Gastrocnemius medialis (tissue), 4 donors: ENCODE measurements at regions of chr6 and their contacts with region 1.

Region 1: DNA sequence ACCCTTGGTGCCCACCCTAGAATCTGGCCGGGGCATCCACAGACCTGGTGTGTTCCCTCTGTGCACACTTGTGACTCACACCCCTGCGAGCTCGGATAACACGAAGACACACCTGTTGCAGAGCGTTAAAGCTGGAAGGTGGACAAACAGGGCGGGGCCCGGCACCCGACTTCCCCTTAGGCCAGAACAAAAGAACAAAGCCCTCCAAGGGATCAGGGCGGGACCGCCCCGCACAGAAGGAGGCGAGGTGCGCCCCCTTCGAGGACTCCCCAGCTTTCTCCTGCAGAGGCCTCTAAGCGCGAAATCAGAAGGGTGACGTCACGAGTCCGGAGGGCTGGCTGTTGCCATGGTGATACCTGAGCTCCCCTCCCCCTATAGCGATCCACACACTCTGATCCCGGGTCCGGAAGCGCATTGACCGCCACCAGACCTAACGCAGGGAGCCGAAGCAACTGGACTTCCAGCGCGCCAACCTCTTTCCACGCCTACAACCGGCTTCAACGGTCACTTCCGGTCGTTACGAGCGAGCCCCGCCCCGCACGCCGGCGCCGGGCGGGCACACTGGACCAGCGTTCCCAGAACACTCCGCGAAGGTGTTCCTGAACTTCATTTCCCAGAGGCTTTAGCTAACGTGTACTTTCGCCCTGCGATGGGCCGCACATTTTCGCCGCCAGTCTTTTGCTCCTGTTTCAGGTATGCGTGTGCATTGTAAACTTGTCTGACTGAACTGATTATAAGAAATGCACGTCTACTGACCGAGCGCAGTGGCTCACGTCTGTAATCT is at the start of gene ZNF184:
- DNase-seq: peak; percentile 88 to 93
- ATAC-seq: peak; percentile 97 to 99
- H3K4me3 ChIP-seq: peak within 1 kb of the TSS; percentile 62 to 98 (median 85)
- H3K27ac ChIP-seq: peak within 1 kb of the TSS; percentile 87 to 97 (median 95)
- H3K4me1 ChIP-seq: peaks cover 13 to 20% of the 10 kb centered on the region in 2 donors
- H3K27me3 ChIP-seq: no peaks in the 10 kb centered on the region
- CTCF ChIP-seq: peak in 1 of 5 experiments; percentile 4
- POLR2A ChIP-seq: peak; percentile 77
- total RNA-seq, gene ZNF184: 3.9 to 6.0 (median 4.4) TPM

Region 2: GRCh38 chr6:26156076-26156849 is 1316.5 kb before region 1 on chr6:
- in situ Hi-C with region 1: no loop called
- intact Hi-C with region 1: loop called (anchors 10 kb)
- DNase-seq: peak; percentile 81 to 89
- ATAC-seq: peak; percentile 70 to 76
- H3K4me3 ChIP-seq: peak overlapping the region; percentile 71 to 95 (median 77)
- H3K27ac ChIP-seq: peak overlapping the region; percentile 88 to 97 (median 93)
- H3K4me1 ChIP-seq: peaks cover 11 to 23% of the 10 kb centered on the region in 2 donors
- H3K27me3 ChIP-seq: no peaks in the 10 kb centered on the region
- CTCF ChIP-seq: no peak
- POLR2A ChIP-seq: peak; percentile 99

Region 3: DNA sequence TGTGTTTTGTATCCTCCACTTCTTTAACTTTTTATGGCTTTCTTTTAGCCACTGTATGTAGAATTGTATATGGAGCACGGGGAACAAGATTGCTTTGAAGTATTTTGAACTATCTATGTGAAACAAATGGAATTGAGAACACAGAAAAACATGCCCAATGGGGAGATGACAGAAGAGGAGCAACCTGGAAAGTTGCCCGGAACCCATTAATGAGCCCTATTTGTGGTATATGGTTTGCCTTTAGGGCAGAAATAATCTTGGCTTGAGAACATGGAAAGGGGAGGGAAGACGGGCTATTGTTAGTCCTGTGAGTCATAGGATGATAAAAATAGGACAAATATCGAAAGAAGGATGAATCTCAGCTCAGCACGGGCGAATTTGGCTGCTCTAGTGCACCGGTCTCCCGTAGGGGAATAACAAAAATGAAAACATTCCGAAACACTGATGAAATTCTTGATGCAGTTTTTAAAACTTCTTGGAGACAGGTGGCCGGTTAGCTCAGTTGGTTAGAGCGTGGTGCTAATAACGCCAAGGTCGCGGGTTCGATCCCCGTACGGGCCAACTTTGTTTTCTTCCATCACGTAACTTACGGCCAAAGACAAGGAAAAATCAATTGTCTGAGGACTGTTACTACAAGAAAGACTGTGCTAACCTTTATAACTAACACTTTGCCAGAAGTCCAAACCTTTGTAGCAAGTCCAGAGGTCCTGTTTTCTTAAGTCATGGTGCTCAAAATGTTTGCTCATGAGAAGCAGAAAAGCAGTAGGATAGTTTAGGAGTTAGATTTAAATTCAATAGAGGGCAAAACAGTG is 919.0 kb before region 1 on chr6:
- in situ Hi-C with region 1: no loop called
- intact Hi-C with region 1: loop called (anchors 10 kb)
- DNase-seq: peak; percentile 44 to 72
- ATAC-seq: peak; percentile 96 to 97
- H3K4me3 ChIP-seq: peak overlapping the region; percentile 52 to 63 (median 60)
- H3K27ac ChIP-seq: peak overlapping the region; percentile 75 to 85 (median 79)
- H3K4me1 ChIP-seq: peaks cover 10 to 13% of the 10 kb centered on the region in 2 donors
- H3K27me3 ChIP-seq: no peaks in the 10 kb centered on the region
- CTCF ChIP-seq: no peak
- POLR2A ChIP-seq: no peak

Region 4: DNA sequence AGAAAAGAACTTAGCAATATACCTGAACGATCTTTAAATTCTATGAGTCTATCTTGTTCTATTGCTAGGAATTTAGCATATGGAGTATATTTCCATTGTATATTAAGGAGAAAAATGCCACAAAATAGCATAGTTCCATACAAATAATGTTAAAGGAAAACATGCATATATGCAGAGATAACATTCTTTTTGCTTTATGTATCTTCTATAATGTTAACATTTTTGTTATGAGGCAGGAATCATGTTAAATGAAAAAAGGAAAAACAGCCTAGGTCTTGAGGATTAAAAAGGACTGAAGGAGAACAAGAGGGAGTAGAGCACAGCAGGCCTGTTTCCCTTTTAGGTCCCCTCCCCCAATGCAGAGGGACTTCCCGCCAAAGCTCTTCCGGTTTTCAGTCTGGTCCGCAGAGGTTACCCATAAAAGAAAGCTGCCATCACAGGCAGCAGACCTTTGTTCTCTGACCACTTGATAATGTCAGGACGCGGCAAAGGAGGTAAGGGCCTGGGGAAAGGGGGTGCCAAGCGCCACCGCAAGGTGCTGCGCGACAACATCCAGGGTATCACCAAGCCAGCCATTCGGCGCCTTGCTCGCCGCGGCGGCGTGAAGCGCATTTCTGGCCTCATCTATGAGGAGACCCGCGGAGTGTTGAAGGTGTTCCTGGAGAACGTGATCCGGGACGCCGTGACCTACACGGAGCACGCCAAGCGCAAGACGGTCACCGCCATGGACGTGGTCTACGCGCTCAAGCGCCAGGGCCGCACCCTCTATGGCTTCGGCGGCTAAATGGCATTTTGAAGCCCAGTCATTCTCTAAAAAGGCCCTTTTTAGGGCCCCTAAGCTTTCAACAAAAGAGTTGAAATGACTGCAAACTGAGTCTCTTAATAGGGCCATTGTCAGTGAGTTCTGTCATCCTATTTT is 333.7 kb before region 1 on chr6:
- in situ Hi-C with region 1: no loop called
- intact Hi-C with region 1: no loop called
- DNase-seq: no peak
- ATAC-seq: peak in 1 of 2 donors; percentile 55
- H3K4me3 ChIP-seq: peak overlapping the region; percentile 39 to 56 (median 49)
- H3K27ac ChIP-seq: peak overlapping the region; percentile 64 to 78 (median 70)
- H3K4me1 ChIP-seq: no peaks in the 10 kb centered on the region
- H3K27me3 ChIP-seq: peaks cover 0 to 18% (median 0%) of the 10 kb centered on the region in 3 donors
- CTCF ChIP-seq: no peak
- POLR2A ChIP-seq: peak in 1 of 2 donors; percentile 35

Region 5: GRCh38 chr6:27177485-27178406 is 295.1 kb before region 1 on chr6:
- in situ Hi-C with region 1: loop called in 1 of 4 experiments (anchors 10 kb)
- intact Hi-C with region 1: loop called (anchors 5 kb)
- DNase-seq: peak; percentile 29 to 55
- ATAC-seq: peak; percentile 68 to 74
- H3K4me3 ChIP-seq: peak overlapping the region; percentile 81 to 92 (median 84)
- H3K27ac ChIP-seq: peak overlapping the region; percentile 55 to 72 (median 62)
- H3K4me1 ChIP-seq: peaks cover 5% of the 10 kb centered on the region in 2 donors
- H3K27me3 ChIP-seq: peaks cover 0 to 2% (median 0%) of the 10 kb centered on the region in 3 donors
- CTCF ChIP-seq: peak in 2 of 5 experiments; percentile 30 to 48
- POLR2A ChIP-seq: peak in 1 of 2 donors; percentile 18

Region 6: DNA sequence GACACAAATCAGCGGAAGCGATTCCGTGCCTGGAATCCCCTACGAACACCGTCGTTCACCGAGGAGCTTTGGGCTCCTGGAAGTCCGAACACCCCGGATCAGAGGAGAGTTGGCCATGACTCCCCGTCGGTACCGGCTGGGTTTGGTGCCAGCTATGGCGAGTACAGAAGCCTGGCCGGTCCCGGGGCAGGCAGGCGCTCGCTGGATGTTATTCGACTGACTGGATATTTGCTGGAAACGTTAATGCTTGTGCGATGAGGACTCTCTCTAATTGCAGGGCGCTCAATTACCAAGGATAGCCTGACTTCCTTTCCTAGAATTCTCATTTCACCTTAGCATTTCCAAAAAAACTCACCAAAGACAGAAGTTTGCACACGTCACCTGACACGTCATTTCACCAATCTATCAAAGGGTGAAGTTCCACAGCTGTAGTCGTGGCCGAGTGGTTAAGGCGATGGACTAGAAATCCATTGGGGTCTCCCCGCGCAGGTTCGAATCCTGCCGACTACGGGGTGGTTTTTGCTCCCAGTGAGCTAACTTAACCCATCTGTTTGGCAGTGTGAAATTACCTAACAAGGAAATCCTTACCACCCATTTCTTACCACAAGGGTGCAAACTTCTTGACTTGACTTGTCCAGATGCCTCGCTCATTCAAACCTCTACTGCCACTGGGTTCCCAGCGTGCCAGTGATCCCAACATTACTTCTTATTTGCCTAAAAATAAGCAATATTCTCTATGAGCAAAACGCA is 22.8 kb after region 1 on chr6:
- in situ Hi-C with region 1: no loop called
- intact Hi-C with region 1: no loop called
- DNase-seq: peak in 1 of 2 donors; percentile 12
- ATAC-seq: no peak
- H3K4me3 ChIP-seq: peak overlapping the region; percentile 14 to 54 (median 36)
- H3K27ac ChIP-seq: no peak overlapping the region
- H3K4me1 ChIP-seq: no peaks in the 10 kb centered on the region
- H3K27me3 ChIP-seq: peaks cover 34 to 55% (median 38%) of the 10 kb centered on the region in 3 donors
- CTCF ChIP-seq: no peak
- POLR2A ChIP-seq: no peak

Region 7: GRCh38 chr6:28080631-28081485 is 608.0 kb after region 1 on chr6:
- in situ Hi-C with region 1: no loop called
- intact Hi-C with region 1: loop called (anchors 5 kb)
- DNase-seq: peak; percentile 90 to 93
- ATAC-seq: peak; percentile 100
- H3K4me3 ChIP-seq: peak overlapping the region; percentile 72 to 92 (median 85)
- H3K27ac ChIP-seq: peak overlapping the region; percentile 84 to 90 (median 87)
- H3K4me1 ChIP-seq: peaks cover 10 to 11% of the 10 kb centered on the region in 2 donors
- H3K27me3 ChIP-seq: no peaks in the 10 kb centered on the region
- CTCF ChIP-seq: no peak
- POLR2A ChIP-seq: no peak

Region 8: GRCh38 chr6:28218271-28219248 is 745.8 kb after region 1 on chr6:
- in situ Hi-C with region 1: no loop called
- intact Hi-C with region 1: loop called (anchors 10 kb)
- DNase-seq: peak; percentile 58 to 76
- ATAC-seq: peak; percentile 92 to 95
- H3K4me3 ChIP-seq: peak overlapping the region; percentile 65 to 82 (median 76)
- H3K27ac ChIP-seq: peak overlapping the region; percentile 81 to 89 (median 84)
- H3K4me1 ChIP-seq: peaks cover 8 to 22% of the 10 kb centered on the region in 2 donors
- H3K27me3 ChIP-seq: peaks cover 12 to 35% (median 16%) of the 10 kb centered on the region in 3 donors
- CTCF ChIP-seq: no peak
- POLR2A ChIP-seq: peak in 1 of 2 donors; percentile 20